ENCODE measurements at regions of chr15 and their contacts with region 1.

Region 1: DNA sequence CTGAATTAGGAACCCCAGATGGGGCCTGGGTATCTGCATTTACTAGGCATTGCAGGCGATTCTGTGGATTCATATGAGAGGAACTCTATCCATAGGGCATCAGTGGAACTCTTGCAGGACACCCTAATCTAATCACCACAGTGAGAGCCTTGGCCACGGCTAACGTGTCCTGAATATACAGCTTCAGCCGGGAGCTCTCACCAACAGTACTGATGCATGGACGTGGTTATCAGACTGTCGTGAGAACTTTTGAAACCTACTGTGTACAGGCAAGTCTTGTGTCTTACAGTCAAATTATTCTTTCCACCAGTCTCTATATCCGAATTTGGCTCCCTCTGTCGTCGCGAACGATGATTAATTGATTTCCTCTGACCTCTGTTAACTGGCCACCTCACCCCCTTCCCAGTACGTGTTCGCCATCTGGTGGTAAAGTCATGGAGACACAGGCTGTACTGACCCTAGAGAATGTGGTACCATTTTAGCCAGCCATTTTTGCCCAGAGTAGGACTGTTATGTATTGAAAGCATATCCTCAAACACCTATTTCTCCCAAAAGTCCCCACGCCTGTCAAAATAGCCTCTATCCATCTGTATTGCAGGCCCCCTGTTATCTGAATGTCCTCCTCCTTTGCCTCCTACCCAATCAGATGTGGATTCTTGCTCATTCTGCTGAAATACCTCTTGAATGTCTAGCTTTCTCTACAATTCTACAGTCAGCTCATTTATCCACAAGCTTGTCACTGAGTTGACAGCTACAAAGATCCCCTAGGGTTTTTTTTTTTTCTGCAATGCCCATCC is 39.7 kb downstream of the GLDN start:
- DNase-seq: peak; percentile 78
- H3K4me3 ChIP-seq: peak overlapping the region in 1 of 2 experiments; percentile 33; a peak in 1 of 4 replicates
- H3K27ac ChIP-seq: no peak overlapping the region
- H3K4me1 ChIP-seq: peaks cover 0 to 5% of the 10 kb centered on the region in 2 experiments; a peak in 1 of 4 replicates
- H3K27me3 ChIP-seq: no peaks in the 10 kb centered on the region; the same call in 1 of the 2 replicates
- CTCF ChIP-seq: peak; percentile 85
- EP300 ChIP-seq: no peak
- RAD21 ChIP-seq: peak; percentile 99

Region 2: DNA sequence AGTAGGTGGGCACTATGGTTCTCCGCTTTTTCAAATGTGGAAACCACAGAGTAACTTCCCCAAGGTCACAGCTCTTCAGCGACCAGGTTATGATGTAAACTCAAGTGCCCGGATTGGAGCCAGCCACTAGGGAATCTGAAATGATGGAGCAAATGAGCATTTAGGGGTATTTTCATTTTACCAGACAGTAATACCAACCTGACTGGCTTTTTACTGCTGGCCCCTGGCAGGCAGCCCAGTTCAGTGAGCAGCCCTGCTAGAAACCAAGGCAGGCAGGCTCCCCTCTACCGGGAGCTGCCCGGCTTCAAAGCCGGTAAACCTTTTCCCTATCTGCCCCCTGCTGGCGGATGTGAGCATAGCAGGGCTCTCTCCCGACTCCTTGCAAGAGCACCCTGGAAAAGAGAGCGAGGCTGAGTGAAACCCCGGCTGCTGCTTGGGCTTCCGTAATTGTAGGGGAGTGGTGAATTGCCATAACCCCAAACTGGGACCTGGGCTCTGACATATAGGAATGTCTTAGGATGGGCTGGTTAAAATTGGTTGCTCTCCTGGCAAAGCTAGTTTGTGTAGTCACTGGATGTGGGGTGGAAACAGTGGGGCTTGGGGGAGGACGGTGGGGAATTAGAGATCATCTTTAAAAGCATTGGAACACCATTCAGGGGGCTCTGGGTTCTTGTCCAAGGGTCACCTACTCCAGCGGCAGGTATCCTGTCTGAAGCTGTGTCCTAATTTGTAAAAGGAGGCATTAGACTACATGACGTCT is 188.5 kb before region 1 on chr15:
- CTCF ChIA-PET with region 1: interaction called, 26 read pairs
- POLR2A ChIA-PET with region 1: no interaction called
- DNase-seq: peak; percentile 76
- H3K4me3 ChIP-seq: no peak overlapping the region
- H3K27ac ChIP-seq: no peak overlapping the region
- H3K4me1 ChIP-seq: peaks cover 0 to 2% of the 10 kb centered on the region in 2 experiments; a peak in 1 of 4 replicates
- H3K27me3 ChIP-seq: peaks cover 21% of the 10 kb centered on the region; the same call in 1 of the 2 replicates
- CTCF ChIP-seq: peak; percentile 93
- EP300 ChIP-seq: no peak
- RAD21 ChIP-seq: peak; percentile 82

Region 3: GRCh38 chr15:51227940-51228783 is 153.0 kb before region 1 on chr15:
- CTCF ChIA-PET with region 1: interaction called, 147 read pairs
- POLR2A ChIA-PET with region 1: no interaction called
- DNase-seq: no peak
- H3K4me3 ChIP-seq: no peak overlapping the region
- H3K27ac ChIP-seq: peak overlapping the region in 1 of 2 experiments; percentile 56; a peak in 2 of 4 replicates
- H3K4me1 ChIP-seq: peaks cover 3 to 11% of the 10 kb centered on the region in 2 experiments; a peak in 2 of 4 replicates
- H3K27me3 ChIP-seq: no peaks in the 10 kb centered on the region
- CTCF ChIP-seq: no peak
- EP300 ChIP-seq: no peak
- RAD21 ChIP-seq: no peak

Region 4: DNA sequence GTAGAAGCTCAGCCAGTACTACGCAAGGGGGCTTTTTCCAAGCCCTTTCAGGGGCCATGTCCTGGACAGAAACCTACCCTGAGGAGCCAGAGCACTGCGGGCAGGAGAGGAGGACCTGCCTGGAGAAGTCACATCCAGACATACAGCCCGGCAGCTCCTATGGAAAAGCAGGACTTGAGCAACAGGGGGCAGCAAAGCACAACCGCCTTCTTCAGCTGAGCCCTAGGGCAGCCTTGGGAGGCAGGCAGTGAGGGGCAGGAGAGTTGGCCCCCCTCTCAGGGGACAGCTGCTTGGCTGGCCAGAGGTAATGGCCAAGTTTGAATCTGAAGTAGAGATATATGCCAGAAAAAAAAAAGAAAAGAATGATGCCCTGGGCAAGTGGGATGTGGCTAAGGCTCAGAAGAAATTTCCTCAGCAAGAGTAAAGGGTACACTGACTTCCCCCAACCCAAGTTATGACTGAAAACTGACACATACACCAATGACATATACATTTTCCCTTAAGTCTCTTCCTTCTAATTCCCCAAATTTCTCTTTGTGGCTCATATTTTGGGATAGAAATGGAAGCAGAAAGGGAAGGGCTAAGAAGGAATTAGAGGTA is 99.7 kb before region 1 on chr15:
- CTCF ChIA-PET with region 1: interaction called, 77 read pairs
- POLR2A ChIA-PET with region 1: no interaction called
- DNase-seq: peak; percentile 60
- H3K4me3 ChIP-seq: no peak overlapping the region; a peak in 1 of 4 replicates
- H3K27ac ChIP-seq: no peak overlapping the region
- H3K4me1 ChIP-seq: peaks cover 0 to 8% of the 10 kb centered on the region in 2 experiments; a peak in 1 of 4 replicates
- H3K27me3 ChIP-seq: peaks cover 21% of the 10 kb centered on the region; the same call in 1 of the 2 replicates
- CTCF ChIP-seq: peak; percentile 52
- EP300 ChIP-seq: no peak
- RAD21 ChIP-seq: peak; percentile 70

Region 5: DNA sequence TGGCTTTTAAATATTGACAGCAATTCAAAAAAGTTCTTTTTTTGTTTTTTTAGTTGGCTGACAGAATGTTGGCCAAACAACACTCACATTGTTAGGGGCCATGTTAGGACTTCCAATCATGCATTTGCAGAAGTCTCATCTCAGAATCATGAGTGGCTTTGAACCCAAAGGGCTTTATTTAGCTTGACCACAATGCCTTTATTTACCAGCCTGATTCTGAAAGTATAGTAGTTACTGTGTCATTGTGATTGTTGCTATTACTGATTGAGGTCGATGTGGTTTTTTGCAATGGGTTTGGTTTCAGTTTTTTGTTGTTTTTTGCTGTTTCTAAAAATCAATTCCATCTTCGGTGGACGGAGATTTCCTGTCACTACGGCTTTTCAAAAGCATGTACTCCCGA is 32.5 kb before region 1 on chr15:
- CTCF ChIA-PET with region 1: interaction called, 11 read pairs
- POLR2A ChIA-PET with region 1: no interaction called
- DNase-seq: no peak
- H3K4me3 ChIP-seq: no peak overlapping the region
- H3K27ac ChIP-seq: no peak overlapping the region
- H3K4me1 ChIP-seq: no peaks in the 10 kb centered on the region
- H3K27me3 ChIP-seq: no peaks in the 10 kb centered on the region; the same call in 1 of the 2 replicates
- CTCF ChIP-seq: no peak
- EP300 ChIP-seq: no peak
- RAD21 ChIP-seq: no peak

Region 6: GRCh38 chr15:51368751-51369450 is 12.3 kb before region 1 on chr15:
- CTCF ChIA-PET with region 1: interaction called, 14 read pairs
- POLR2A ChIA-PET with region 1: no interaction called
- DNase-seq: no peak
- H3K4me3 ChIP-seq: no peak overlapping the region
- H3K27ac ChIP-seq: no peak overlapping the region
- H3K4me1 ChIP-seq: peaks cover 0 to 13% of the 10 kb centered on the region in 2 experiments; a peak in 2 of 4 replicates
- H3K27me3 ChIP-seq: no peaks in the 10 kb centered on the region; the same call in 1 of the 2 replicates
- CTCF ChIP-seq: no peak
- EP300 ChIP-seq: no peak
- RAD21 ChIP-seq: no peak